ENCODE measurements at regions of chr6 and their contacts with region 1.

Region 1: GRCh38 chr6:88238065-88238464 is 71.9 kb upstream of the CNR1 start:
- DNase-seq: peak; percentile 33
- ATAC-seq: peak; percentile 89
- H3K4me3 ChIP-seq: no peak overlapping the region
- H3K27ac ChIP-seq: no peak overlapping the region
- H3K4me1 ChIP-seq: no peaks in the 10 kb centered on the region
- H3K27me3 ChIP-seq: no peaks in the 10 kb centered on the region
- CTCF ChIP-seq: peak; percentile 77
- EP300 ChIP-seq: no peak
- POLR2A ChIP-seq: no peak
- RAD21 ChIP-seq: peak; percentile 44; the same call in 1 of the 2 replicates

Region 2: DNA sequence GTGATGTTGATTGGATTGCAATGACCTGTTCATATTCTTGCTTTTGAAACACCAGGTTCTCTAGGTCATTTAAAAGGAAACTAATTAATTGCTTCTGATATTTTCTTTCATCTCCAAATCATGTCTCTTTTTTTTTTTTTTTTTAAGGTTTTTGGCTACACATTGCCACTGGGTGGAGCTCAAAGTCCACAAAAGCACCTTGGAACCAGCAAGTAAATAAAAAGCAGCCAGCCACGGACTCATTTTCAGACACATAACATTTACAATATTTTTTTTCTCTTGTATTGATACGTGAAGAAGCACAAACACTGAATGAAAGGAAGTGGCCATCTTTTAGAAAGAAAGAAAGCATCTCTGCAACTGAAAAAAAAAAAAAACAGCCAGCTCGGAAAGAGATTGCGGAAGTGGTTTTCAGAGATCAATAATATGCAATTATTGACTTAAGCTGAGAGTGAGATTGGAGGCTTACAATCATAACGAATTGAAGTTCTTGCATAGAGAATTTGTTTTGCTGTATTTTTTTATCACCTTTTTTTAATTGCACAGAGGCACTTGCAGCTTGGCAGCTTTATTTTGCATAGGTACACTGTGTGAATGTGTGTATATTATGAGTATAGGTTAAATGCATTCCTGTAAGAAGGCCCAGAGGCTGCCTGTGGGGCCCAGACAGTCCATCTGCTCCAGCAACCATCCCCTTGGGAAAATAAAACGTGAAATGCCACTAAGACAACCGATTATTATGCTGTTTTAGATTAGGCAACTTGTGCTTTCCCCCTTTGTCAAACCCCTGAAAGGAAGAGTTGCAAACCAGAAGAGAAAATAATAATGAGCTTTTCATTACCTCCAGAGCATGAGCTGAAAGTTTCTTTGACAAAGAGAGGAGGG is 1171.4 kb before region 1 on chr6:
- CTCF ChIA-PET with region 1: no interaction called
- POLR2A ChIA-PET with region 1: no interaction called
- in situ Hi-C with region 1: no loop called
- intact Hi-C with region 1: loop called (anchors 5 kb)
- DNase-seq: peak; percentile 51
- ATAC-seq: peak; percentile 87
- H3K4me3 ChIP-seq: peak overlapping the region; percentile 11 to 41 (median 41); a peak in 4 of 6 replicates
- H3K27ac ChIP-seq: no peak overlapping the region
- H3K4me1 ChIP-seq: peaks cover 17% of the 10 kb centered on the region
- H3K27me3 ChIP-seq: no peaks in the 10 kb centered on the region; a peak in 1 of 5 replicates
- CTCF ChIP-seq: peak; percentile 66
- EP300 ChIP-seq: peak in 1 of 2 experiments; percentile 29; a peak in 1 of 4 replicates
- POLR2A ChIP-seq: no peak
- RAD21 ChIP-seq: peak; percentile 30; the same call in 1 of the 2 replicates

Region 3: DNA sequence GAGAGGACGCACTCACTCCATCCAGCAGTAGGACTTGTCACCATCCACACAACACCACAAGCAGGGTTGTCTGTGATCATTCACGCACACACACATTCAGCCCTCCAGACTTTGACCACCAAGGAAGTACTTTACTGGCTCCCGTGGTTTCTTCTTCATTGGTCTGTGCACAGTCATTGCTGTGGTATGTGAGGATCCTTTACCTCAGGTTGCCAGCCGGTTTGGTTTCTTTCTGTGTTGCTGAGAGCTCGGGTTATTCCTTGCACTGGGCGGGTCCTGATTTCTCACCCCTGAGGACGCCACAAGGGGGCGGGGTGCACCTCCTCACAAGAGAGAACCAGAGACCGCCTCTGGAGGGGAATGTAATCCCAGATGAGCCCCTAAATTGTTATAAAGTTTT is 754.1 kb before region 1 on chr6:
- CTCF ChIA-PET with region 1: no interaction called
- POLR2A ChIA-PET with region 1: no interaction called
- in situ Hi-C with region 1: no loop called
- intact Hi-C with region 1: loop called (anchors 5 kb)
- DNase-seq: peak; percentile 13
- ATAC-seq: peak; percentile 79
- H3K4me3 ChIP-seq: no peak overlapping the region
- H3K27ac ChIP-seq: no peak overlapping the region
- H3K4me1 ChIP-seq: peaks cover 16% of the 10 kb centered on the region
- H3K27me3 ChIP-seq: no peaks in the 10 kb centered on the region
- CTCF ChIP-seq: peak; percentile 58
- EP300 ChIP-seq: no peak
- POLR2A ChIP-seq: no peak
- RAD21 ChIP-seq: no peak

Region 4: DNA sequence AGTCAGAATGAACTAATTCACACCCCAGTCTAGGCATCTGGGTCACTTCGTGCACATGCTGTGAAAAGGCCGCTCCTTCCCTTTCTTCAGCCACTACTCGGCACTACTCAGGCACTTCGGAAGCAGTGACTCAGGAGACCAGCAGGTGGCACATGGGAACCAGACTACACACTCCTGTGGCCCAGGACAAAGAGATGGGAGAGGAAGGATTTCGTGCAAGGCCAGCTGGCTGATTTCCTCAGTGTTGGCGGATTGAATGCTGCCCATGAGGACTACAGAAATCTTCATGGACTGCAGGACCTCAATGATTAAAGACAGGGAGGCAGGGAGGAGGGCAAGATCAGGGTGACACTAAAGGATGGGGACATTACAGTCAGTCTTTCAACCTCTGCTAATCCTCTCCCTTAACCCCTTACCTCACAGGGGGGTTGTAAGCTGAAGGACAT is 308.2 kb before region 1 on chr6:
- CTCF ChIA-PET with region 1: interaction called, 15 read pairs
- POLR2A ChIA-PET with region 1: no interaction called
- in situ Hi-C with region 1: no loop called
- intact Hi-C with region 1: loop called (anchors 1 kb)
- DNase-seq: peak; percentile 78
- ATAC-seq: peak; percentile 99
- H3K4me3 ChIP-seq: peak overlapping the region in 2 of 3 experiments; percentile 29 to 42; a peak in 4 of 6 replicates
- H3K27ac ChIP-seq: no peak overlapping the region
- H3K4me1 ChIP-seq: peaks cover 26% of the 10 kb centered on the region
- H3K27me3 ChIP-seq: no peaks in the 10 kb centered on the region; a peak in 1 of 5 replicates
- CTCF ChIP-seq: peak; percentile 97
- EP300 ChIP-seq: no peak
- POLR2A ChIP-seq: no peak
- RAD21 ChIP-seq: peak; percentile 82

Region 5: GRCh38 chr6:88177961-88178464 is 60.1 kb before region 1 on chr6:
- CTCF ChIA-PET with region 1: no interaction called
- POLR2A ChIA-PET with region 1: no interaction called
- in situ Hi-C with region 1: no loop called
- intact Hi-C with region 1: no loop called
- DNase-seq: peak; percentile 44
- ATAC-seq: no peak; the same call in 2 of the 3 replicates
- H3K4me3 ChIP-seq: no peak overlapping the region
- H3K27ac ChIP-seq: no peak overlapping the region
- H3K4me1 ChIP-seq: peaks cover 12% of the 10 kb centered on the region
- H3K27me3 ChIP-seq: peaks cover 2 to 9% of the 10 kb centered on the region in 2 experiments; a peak in 3 of 5 replicates
- CTCF ChIP-seq: no peak
- EP300 ChIP-seq: no peak
- POLR2A ChIP-seq: no peak
- RAD21 ChIP-seq: no peak

Region 6: GRCh38 chr6:88223298-88223697 is 14.8 kb before region 1 on chr6:
- CTCF ChIA-PET with region 1: no interaction called
- POLR2A ChIA-PET with region 1: no interaction called
- in situ Hi-C with region 1: no loop called
- intact Hi-C with region 1: no loop called
- DNase-seq: no peak
- ATAC-seq: no peak
- H3K4me3 ChIP-seq: no peak overlapping the region
- H3K27ac ChIP-seq: no peak overlapping the region
- H3K4me1 ChIP-seq: no peaks in the 10 kb centered on the region
- H3K27me3 ChIP-seq: no peaks in the 10 kb centered on the region
- CTCF ChIP-seq: no peak
- EP300 ChIP-seq: no peak
- POLR2A ChIP-seq: no peak
- RAD21 ChIP-seq: no peak

Region 7: DNA sequence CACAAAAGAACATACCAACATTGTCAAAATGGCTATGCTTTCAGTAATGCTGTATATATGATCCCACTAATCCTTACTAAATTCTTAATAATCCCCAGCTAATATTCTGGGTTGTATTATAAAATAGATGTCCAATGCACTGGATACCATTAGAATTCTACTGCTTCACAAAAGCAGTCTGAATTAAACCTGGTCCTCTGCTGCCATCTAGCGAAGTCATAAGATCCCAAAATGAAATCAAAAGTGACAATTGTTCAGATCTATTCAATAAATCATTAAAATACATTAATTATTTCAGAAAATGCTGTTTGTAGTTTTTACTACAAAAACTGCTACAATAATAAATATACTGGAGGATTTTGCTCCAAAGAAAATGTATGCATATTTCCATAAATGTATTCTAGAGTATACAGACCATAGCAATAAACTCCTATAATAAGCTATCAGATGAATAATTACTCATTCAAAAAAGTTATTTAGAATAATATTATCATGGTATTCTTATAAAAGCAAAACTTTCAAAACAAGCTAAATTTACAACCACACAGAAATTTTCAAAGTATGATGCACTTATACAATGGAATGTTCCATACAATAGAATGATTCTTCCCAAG is 632.8 kb after region 1 on chr6:
- CTCF ChIA-PET with region 1: no interaction called
- POLR2A ChIA-PET with region 1: no interaction called
- in situ Hi-C with region 1: no loop called
- intact Hi-C with region 1: loop called (anchors 5 kb)
- DNase-seq: peak; percentile 50
- ATAC-seq: no peak
- H3K4me3 ChIP-seq: no peak overlapping the region
- H3K27ac ChIP-seq: no peak overlapping the region
- H3K4me1 ChIP-seq: peaks cover 23% of the 10 kb centered on the region
- H3K27me3 ChIP-seq: no peaks in the 10 kb centered on the region
- CTCF ChIP-seq: peak; percentile 65
- EP300 ChIP-seq: no peak
- POLR2A ChIP-seq: no peak
- RAD21 ChIP-seq: peak; percentile 19; the same call in 1 of the 2 replicates